ENCODE measurements at regions of chr9 and their contacts with region 1.

Region 1: GRCh38 chr9:131227959-131228460 is 48.3 kb downstream of the FAM78A start:
- DNase-seq: no peak
- H3K4me3 ChIP-seq: no peak overlapping the region
- H3K27ac ChIP-seq: no peak overlapping the region
- H3K4me1 ChIP-seq: peaks cover 0 to 10% (median 0%) of the 10 kb centered on the region in 4 donors
- H3K27me3 ChIP-seq: no peaks in the 10 kb centered on the region
- CTCF ChIP-seq: no peak
- EP300 ChIP-seq: no peak
- POLR2A ChIP-seq: no peak

Region 2: DNA sequence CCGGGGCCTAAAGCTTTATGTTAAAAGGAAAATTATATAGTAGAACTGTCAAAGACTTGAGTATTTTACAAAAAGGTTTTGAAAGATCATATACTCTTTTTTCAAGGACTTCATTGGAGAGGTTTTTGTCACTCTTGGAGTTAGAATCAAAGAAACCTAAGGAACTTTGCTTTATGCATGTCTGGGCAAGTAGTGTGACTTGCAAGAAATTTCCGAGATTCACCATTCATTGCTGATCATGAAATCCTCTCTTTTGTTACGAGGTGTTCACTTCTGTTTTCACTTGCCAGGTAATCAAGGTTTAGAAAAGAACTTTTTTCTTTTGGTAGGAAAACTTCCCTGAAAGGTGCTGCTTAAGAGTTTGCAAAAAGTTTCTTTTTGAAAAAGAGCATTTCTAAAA is 37.8 kb before region 1 on chr9:
- in situ Hi-C with region 1: no loop called
- intact Hi-C with region 1: loop called (anchors 1 kb)
- DNase-seq: no peak
- H3K4me3 ChIP-seq: no peak overlapping the region
- H3K27ac ChIP-seq: no peak overlapping the region
- H3K4me1 ChIP-seq: no peaks in the 10 kb centered on the region
- H3K27me3 ChIP-seq: no peaks in the 10 kb centered on the region
- CTCF ChIP-seq: no peak
- EP300 ChIP-seq: no peak
- POLR2A ChIP-seq: no peak

Region 3: DNA sequence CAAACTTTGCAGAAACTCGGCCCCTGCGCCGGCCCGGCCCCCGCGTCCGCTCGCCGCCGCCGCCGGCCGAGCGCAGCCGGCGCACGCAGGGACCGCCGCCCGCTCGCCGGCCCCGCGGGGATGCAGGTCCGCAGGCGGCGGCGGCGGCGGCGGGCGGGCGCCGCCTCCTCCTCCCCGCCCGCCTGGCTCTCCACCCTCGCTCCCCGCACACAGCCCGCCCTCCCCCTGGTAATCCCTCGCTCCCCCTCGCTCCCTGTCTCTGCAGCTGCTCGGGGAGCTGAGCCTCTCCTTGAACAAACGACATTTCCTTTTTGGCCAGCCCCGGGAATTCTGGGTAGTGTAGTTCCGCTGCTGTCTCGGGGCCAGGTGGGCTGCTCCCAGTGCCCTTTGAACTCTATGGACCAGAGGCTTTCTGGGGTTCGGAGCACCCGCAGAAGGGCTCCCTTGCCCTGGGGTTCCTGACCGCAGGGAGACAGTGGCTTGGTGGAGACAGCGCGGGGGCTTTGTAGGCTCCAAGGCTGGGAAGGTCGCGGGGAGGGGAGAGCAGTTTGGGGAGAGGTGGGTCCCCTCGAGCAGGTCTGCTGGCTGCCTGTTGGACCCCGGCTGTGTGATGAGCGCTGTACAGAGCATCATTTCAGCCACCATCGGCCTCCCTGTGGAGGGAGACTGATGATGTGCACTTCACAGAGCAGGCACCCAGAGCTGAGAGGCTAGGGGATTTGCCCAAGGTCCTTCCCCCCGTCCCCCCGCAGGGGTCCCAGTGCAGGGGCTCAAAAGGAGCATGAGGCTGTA is 50.1 kb after region 1 on chr9:
- in situ Hi-C with region 1: no loop called
- intact Hi-C with region 1: no loop called
- DNase-seq: peak; percentile 80
- H3K4me3 ChIP-seq: peak overlapping the region; percentile 72 to 84 (median 76)
- H3K27ac ChIP-seq: peak overlapping the region; percentile 76 to 84 (median 82)
- H3K4me1 ChIP-seq: peaks cover 0 to 24% (median 16%) of the 10 kb centered on the region in 4 donors
- H3K27me3 ChIP-seq: peaks cover 65% of the 10 kb centered on the region
- CTCF ChIP-seq: no peak
- EP300 ChIP-seq: no peak
- POLR2A ChIP-seq: no peak

Measured in transverse colon (tissue), 4 donors.